ENCODE measurements at regions of chr6 and their contacts with region 1.

Region 1: DNA sequence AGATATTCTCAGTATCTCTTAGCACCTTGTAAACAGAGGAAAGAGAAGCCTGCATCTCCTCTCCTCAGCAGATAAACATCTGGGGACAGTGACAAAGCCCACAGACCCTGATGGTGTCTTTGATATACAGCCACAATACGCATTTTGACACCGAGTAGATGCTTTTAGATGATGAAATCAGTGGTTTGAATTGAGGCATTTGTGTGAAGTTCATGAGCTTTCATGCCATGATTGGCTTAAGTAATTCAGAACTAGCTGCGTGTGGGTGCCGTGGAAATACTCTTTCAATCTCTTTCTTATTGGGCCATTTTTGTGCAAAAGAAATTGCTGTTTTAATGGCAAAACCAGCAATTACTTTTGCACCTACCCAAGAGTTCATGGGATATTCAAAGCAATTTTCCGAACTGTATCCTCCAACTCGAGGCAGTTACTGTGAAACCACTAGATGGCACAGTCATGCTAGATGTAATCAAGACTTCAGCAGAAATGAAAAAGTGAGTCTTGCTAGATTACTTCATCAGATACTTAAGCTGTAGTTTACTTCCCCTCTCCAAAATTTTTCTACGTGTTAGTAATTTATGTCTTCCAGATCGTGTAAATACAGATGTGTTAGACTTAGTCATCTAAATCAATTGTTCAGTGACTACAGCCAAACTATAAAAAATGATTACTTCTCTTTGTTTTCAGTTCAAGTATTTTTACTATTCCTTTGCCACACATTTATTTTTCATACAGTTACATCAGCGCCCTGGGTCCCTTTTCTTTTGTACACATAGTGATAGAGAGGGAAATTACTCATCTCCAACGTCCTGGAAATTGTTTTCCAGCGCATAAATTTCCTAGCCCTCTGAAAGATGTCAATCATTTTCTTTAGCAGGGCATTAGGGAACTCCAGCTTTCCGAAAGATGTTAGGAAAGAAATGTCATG is 49.4 kb downstream of the IYD start:
- DNase-seq: peak; percentile 49
- ATAC-seq: peak; percentile 80
- H3K4me3 Mint-ChIP-seq: peak overlapping the region; percentile 67
- H3K27ac Mint-ChIP-seq: peak overlapping the region; percentile 87
- H3K4me1 Mint-ChIP-seq: peaks cover 30% of the 10 kb centered on the region
- H3K27me3 Mint-ChIP-seq: peaks cover 12% of the 10 kb centered on the region
- CTCF ChIP-seq: peak; percentile 65

Region 2: GRCh38 chr6:150211700-150212511 is 206.3 kb before region 1 on chr6:
- CTCF ChIA-PET with region 1: no interaction called
- POLR2A ChIA-PET with region 1: no interaction called
- intact Hi-C with region 1: no loop called
- DNase-seq: peak; percentile 5
- ATAC-seq: peak; percentile 39
- H3K4me3 Mint-ChIP-seq: no peak overlapping the region
- H3K27ac Mint-ChIP-seq: no peak overlapping the region
- H3K4me1 Mint-ChIP-seq: no peaks in the 10 kb centered on the region
- H3K27me3 Mint-ChIP-seq: peaks cover 11% of the 10 kb centered on the region
- CTCF ChIP-seq: no peak

Region 3: GRCh38 chr6:150395398-150396009 is 22.7 kb before region 1 on chr6:
- CTCF ChIA-PET with region 1: interaction called, 27 read pairs
- POLR2A ChIA-PET with region 1: no interaction called
- intact Hi-C with region 1: no loop called
- DNase-seq: peak; percentile 61
- ATAC-seq: peak; percentile 71
- H3K4me3 Mint-ChIP-seq: no peak overlapping the region
- H3K27ac Mint-ChIP-seq: no peak overlapping the region
- H3K4me1 Mint-ChIP-seq: no peaks in the 10 kb centered on the region
- H3K27me3 Mint-ChIP-seq: peaks cover 5% of the 10 kb centered on the region
- CTCF ChIP-seq: peak; percentile 64

Region 4: DNA sequence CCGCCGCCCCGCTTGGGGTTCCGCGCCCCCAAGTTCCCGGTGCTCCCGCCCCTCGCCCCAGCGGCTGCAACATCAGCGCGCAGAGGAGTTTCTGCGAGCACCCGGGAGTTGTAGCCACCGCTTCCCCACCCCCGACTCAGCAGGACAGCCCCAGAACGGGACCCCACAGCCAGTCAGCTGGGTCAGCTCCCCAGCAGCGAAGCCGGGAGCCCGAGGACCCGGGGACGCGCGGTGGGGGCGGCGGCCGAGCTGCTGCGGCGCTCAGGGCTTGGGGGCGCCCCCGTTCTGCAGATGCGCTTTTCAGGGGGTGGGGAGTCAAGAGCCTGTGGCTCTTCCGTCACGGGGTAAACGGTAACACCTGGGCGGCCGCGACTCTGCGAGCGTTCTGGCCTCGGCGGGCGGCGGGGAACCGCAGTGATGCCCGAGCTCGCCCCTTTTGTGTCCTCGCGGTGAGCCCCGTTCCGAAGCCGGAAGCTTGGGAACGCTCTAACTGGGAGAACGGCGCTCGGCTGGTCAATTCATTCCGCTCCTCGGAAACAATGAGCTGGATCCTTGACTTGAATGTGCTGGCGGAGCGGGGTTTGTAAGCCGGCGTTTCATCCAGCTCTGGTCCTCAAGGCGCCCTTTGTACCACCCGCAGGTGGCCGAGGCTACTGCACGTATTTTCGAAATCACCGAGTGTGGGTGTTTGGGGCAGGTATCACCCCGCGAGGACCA is 182.3 kb after region 1 on chr6:
- CTCF ChIA-PET with region 1: interaction called, 19 read pairs
- POLR2A ChIA-PET with region 1: interaction called, 3 read pairs
- intact Hi-C with region 1: loop called (anchors 2 kb)
- DNase-seq: peak; percentile 88
- ATAC-seq: peak; percentile 73
- H3K4me3 Mint-ChIP-seq: peak overlapping the region; percentile 79
- H3K27ac Mint-ChIP-seq: peak overlapping the region; percentile 75
- H3K4me1 Mint-ChIP-seq: peaks cover 15% of the 10 kb centered on the region
- H3K27me3 Mint-ChIP-seq: peaks cover 24% of the 10 kb centered on the region
- CTCF ChIP-seq: peak; percentile 69

Region 5: DNA sequence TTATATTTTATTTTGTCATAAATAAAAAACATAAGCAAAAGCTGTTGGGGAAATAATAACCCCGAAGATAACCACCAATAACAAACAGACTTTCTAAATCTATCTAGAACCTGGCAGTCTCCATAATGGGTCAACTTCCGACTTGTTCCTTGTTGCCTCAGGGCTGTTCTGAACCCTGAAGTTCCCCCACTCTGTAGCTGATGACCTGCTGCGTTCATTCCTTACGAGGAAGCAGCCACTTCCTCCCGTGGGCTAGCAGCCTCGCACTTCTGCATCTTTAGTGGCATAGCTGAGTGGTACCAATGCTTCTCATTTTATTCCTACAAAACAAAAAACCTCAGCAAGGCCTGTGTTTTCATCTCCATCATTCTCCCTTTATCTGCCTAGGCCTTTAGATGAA is 284.5 kb after region 1 on chr6:
- CTCF ChIA-PET with region 1: no interaction called
- POLR2A ChIA-PET with region 1: no interaction called
- intact Hi-C with region 1: no loop called
- DNase-seq: no peak
- ATAC-seq: no peak
- H3K4me3 Mint-ChIP-seq: no peak overlapping the region
- H3K27ac Mint-ChIP-seq: no peak overlapping the region
- H3K4me1 Mint-ChIP-seq: peaks cover 3% of the 10 kb centered on the region
- H3K27me3 Mint-ChIP-seq: no peaks in the 10 kb centered on the region
- CTCF ChIP-seq: no peak

Region 6: GRCh38 chr6:150741633-150742504 is 323.7 kb after region 1 on chr6:
- CTCF ChIA-PET with region 1: interaction called, 17 read pairs
- POLR2A ChIA-PET with region 1: no interaction called
- intact Hi-C with region 1: loop called (anchors 10 kb)
- DNase-seq: peak; percentile 41
- ATAC-seq: no peak
- H3K4me3 Mint-ChIP-seq: no peak overlapping the region
- H3K27ac Mint-ChIP-seq: no peak overlapping the region
- H3K4me1 Mint-ChIP-seq: no peaks in the 10 kb centered on the region
- H3K27me3 Mint-ChIP-seq: no peaks in the 10 kb centered on the region
- CTCF ChIP-seq: peak; percentile 59

Region 7: GRCh38 chr6:150822932-150823331 is 404.8 kb after region 1 on chr6:
- CTCF ChIA-PET with region 1: interaction called, 105 read pairs
- POLR2A ChIA-PET with region 1: no interaction called
- intact Hi-C with region 1: no loop called
- DNase-seq: no peak
- ATAC-seq: no peak
- H3K4me3 Mint-ChIP-seq: no peak overlapping the region
- H3K27ac Mint-ChIP-seq: no peak overlapping the region
- H3K4me1 Mint-ChIP-seq: no peaks in the 10 kb centered on the region
- H3K27me3 Mint-ChIP-seq: no peaks in the 10 kb centered on the region
- CTCF ChIP-seq: no peak

Measured in activated CD8-positive, alpha-beta T cell treated with anti-CD3 and anti-CD28 coated beads for 36 hours (primary cell).